ENCODE measurements at regions of chr15 and their contacts with region 1.

Region 1: GRCh38 chr15:52558196-52558595 is 10.6 kb downstream of the ARPP19 start:
- DNase-seq: no peak
- H3K4me3 ChIP-seq: no peak overlapping the region
- H3K27ac ChIP-seq: no peak overlapping the region
- H3K4me1 ChIP-seq: peaks cover 0 to 7% (median 0%) of the 10 kb centered on the region in 4 experiments; a peak in 2 of 7 replicates
- H3K27me3 ChIP-seq: no peaks in the 10 kb centered on the region
- CTCF ChIP-seq: no peak
- EP300 ChIP-seq: no peak
- POLR2A ChIP-seq: no peak
- RAD21 ChIP-seq: no peak

Region 2: GRCh38 chr15:52568601-52569256 is 10.5 kb after region 1 on chr15 and contains the start of gene ARPP19:
- CTCF ChIA-PET with region 1: interaction called, 4 read pairs
- POLR2A ChIA-PET with region 1: interaction called, 12 read pairs
- DNase-seq: peak; percentile 85 to 90
- H3K4me3 ChIP-seq: peak within 1 kb of the TSS; percentile 78 to 98 (median 91)
- H3K27ac ChIP-seq: peak within 1 kb of the TSS; percentile 96
- H3K4me1 ChIP-seq: peaks cover 0 to 7% (median 2%) of the 10 kb centered on the region in 4 experiments; a peak in 3 of 7 replicates
- H3K27me3 ChIP-seq: no peaks in the 10 kb centered on the region
- CTCF ChIP-seq: 0 out of 4 replicates have a peak, but pooled peaks of 1 of the 3 experiments have one; percentile 8
- EP300 ChIP-seq: peak in 1 of 2 experiments; percentile 56; a peak in 1 of 3 replicates
- POLR2A ChIP-seq: peak; percentile 89 to 94
- RAD21 ChIP-seq: peak in 1 of 2 experiments; percentile 37; a peak in 2 of 4 replicates
- total RNA-seq, gene ARPP19: 247 and 274 TPM in 2 replicates

Region 3: DNA sequence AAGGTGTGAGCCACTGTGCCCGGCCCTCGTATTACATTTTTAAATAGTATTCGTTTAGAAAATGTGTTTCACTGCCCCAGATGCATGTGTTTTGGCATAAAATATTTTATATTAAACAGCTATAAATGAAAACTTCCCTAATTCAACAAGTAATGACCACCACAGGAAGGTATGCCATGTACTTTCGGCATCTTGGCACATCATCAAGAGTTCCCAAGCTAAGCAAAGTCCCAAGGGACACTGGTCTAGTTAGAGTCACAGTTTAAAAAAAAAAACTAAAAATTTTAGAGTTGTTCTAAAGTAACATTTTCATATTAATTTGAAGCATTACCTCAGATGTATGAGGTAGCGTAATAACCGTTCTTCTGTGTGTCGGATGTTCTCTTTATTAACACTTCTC is 26.2 kb after region 1 on chr15:
- CTCF ChIA-PET with region 1: no interaction called
- POLR2A ChIA-PET with region 1: no interaction called
- DNase-seq: no peak
- H3K4me3 ChIP-seq: no peak overlapping the region
- H3K27ac ChIP-seq: no peak overlapping the region
- H3K4me1 ChIP-seq: no peaks in the 10 kb centered on the region
- H3K27me3 ChIP-seq: no peaks in the 10 kb centered on the region
- CTCF ChIP-seq: no peak
- EP300 ChIP-seq: no peak
- POLR2A ChIP-seq: no peak
- RAD21 ChIP-seq: no peak

Measured in H1 (cell line).